Activated CD8-positive, alpha-beta T cell treated with anti-CD3 and anti-CD28 coated beads for 36 hours (primary cell): ENCODE measurements at regions of chr4 and their contacts with region 1.

Region 1: DNA sequence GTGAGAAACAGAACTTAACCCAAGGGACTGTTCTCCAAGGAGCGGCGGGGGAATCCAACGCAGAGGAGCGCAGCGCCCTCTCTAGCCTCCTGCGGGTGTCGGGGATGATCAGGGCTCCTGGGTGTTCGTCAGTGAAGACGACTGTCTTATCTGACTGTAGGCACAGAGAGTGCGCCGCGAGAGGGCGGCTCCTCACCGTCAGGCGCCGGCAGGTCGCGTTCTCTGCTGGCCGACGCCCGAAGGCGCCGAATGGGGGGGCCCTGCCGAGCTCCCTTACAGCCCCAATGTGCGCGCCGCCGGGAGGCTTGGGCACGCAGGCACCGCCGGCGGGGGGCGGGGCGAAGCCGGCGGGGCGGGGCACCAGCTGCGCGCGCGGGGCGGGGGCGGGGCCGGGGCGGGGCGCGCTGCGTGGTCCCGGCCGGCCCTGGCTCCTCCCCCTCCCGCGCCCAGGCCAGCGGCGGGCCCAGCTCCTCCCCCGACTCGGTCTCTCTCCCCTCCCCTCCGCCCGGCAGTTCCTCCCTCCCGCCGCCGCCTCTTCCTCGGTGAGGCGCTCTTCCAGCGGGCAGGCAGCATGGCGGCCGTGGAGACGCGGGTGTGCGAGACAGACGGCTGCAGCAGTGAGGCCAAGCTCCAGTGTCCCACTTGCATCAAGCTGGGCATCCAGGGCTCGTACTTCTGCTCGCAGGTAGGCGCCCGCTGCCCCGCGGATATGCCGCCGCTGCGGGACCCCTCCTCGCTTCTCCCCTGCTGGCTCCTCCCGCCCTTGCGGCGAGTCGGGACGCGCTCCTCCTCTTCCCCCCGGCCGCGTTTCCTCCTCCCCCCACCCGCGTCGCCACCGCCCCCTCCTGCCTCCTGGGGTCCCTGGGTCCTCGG is at the start of gene METAP1:
- DNase-seq: peak; percentile 96
- ATAC-seq: peak; percentile 90
- H3K4me3 Mint-ChIP-seq: peak within 1 kb of the TSS; percentile 89
- H3K27ac Mint-ChIP-seq: peak within 1 kb of the TSS; percentile 97
- H3K4me1 Mint-ChIP-seq: peaks cover 38% of the 10 kb centered on the region
- H3K27me3 Mint-ChIP-seq: no peaks in the 10 kb centered on the region
- CTCF ChIP-seq: peak; percentile 44
- total RNA-seq, gene METAP1: 67.1 to 70.4 TPM

Region 2: DNA sequence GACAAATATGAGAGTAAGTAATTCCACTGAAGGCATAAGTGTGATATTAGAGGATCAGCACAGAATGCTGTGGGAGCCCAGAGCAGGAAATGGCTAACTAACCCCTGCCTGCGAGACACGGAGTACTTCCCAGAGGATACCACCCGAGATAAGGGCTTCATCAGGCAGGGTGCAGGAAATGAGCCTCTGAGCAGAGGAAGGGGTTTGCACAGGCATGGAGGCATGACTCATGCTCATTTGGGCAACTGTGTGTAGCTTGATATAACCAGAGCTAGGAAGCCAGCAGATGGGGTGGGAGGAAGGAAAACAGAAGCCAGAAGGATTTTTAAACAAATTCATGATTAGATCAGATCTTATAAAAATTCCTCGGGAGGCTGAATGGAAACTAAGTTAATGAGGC is 267.0 kb before region 1 on chr4:
- CTCF ChIA-PET with region 1: no interaction called
- POLR2A ChIA-PET with region 1: no interaction called
- intact Hi-C with region 1: no loop called
- DNase-seq: no peak
- ATAC-seq: peak; percentile 66
- H3K4me3 Mint-ChIP-seq: no peak overlapping the region
- H3K27ac Mint-ChIP-seq: no peak overlapping the region
- H3K4me1 Mint-ChIP-seq: peaks cover 5% of the 10 kb centered on the region
- H3K27me3 Mint-ChIP-seq: no peaks in the 10 kb centered on the region
- CTCF ChIP-seq: no peak

Region 3: GRCh38 chr4:98786866-98787265 is 208.6 kb before region 1 on chr4:
- CTCF ChIA-PET with region 1: no interaction called
- POLR2A ChIA-PET with region 1: no interaction called
- intact Hi-C with region 1: no loop called
- DNase-seq: no peak
- ATAC-seq: no peak
- H3K4me3 Mint-ChIP-seq: no peak overlapping the region
- H3K27ac Mint-ChIP-seq: no peak overlapping the region
- H3K4me1 Mint-ChIP-seq: no peaks in the 10 kb centered on the region
- H3K27me3 Mint-ChIP-seq: no peaks in the 10 kb centered on the region
- CTCF ChIP-seq: no peak

Region 4: GRCh38 chr4:98851806-98852205 is 143.6 kb before region 1 on chr4:
- CTCF ChIA-PET with region 1: no interaction called
- POLR2A ChIA-PET with region 1: no interaction called
- intact Hi-C with region 1: no loop called
- DNase-seq: no peak
- ATAC-seq: no peak
- H3K4me3 Mint-ChIP-seq: no peak overlapping the region
- H3K27ac Mint-ChIP-seq: no peak overlapping the region
- H3K4me1 Mint-ChIP-seq: no peaks in the 10 kb centered on the region
- H3K27me3 Mint-ChIP-seq: peaks cover 2% of the 10 kb centered on the region
- CTCF ChIP-seq: no peak

Region 5: DNA sequence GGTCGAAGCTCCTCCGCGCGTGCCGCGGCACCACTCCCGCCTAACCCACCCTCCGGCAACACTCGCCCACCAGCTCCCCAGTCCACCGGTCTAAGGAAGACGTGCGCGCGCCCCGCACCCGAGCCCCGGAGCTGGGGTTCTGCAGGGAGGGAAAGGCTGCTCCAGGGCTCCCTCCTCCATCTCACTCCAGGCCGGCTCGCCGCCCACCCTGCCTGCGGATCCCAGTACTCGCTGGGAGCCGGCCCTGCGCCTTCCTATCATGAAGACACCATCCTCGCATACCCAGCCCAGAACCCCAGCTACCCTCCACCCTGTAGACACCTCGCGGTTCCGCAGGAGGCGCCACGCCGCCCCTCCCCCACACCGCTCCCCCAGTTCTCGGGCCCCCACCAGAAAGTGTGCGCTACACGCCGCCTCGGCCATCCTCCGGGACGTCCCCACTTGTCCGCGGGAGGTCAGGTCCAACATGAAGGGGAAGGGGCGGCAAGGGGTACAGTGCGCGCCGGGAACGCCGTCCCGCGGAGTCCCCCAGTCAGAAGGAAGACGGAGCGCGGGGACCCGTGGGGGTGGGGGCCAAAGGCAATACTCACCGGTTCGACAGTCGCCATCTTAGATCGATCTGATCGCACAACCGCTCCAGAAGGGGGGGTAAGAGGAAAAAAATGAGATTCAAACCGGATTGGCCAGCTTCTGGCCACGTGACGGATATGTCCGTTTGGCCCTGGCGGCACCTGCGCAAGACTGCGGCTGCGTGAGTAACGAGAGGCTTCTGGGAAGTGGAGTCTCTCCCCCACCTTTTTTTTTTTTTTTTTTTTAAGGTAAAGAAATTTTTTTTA is 66.7 kb before region 1 on chr4 and contains the start of gene EIF4E:
- CTCF ChIA-PET with region 1: interaction called, 27 read pairs
- POLR2A ChIA-PET with region 1: interaction called, 58 read pairs
- intact Hi-C with region 1: loop called (anchors 5 kb)
- DNase-seq: peak; percentile 98
- ATAC-seq: peak; percentile 78
- H3K4me3 Mint-ChIP-seq: peak within 1 kb of the TSS; percentile 88
- H3K27ac Mint-ChIP-seq: peak within 1 kb of the TSS; percentile 95
- H3K4me1 Mint-ChIP-seq: peaks cover 36% of the 10 kb centered on the region
- H3K27me3 Mint-ChIP-seq: no peaks in the 10 kb centered on the region
- CTCF ChIP-seq: peak; percentile 48
- total RNA-seq, gene EIF4E: 118 to 121 TPM

Region 6: GRCh38 chr4:98950925-98951324 is 44.5 kb before region 1 on chr4:
- CTCF ChIA-PET with region 1: interaction called, 10 read pairs
- POLR2A ChIA-PET with region 1: no interaction called
- intact Hi-C with region 1: no loop called
- DNase-seq: no peak
- ATAC-seq: no peak
- H3K4me3 Mint-ChIP-seq: no peak overlapping the region
- H3K27ac Mint-ChIP-seq: no peak overlapping the region
- H3K4me1 Mint-ChIP-seq: no peaks in the 10 kb centered on the region
- H3K27me3 Mint-ChIP-seq: peaks cover under 1% of the 10 kb centered on the region
- CTCF ChIP-seq: no peak

Region 7: GRCh38 chr4:99008051-99008450 is 12.6 kb after region 1 on chr4:
- CTCF ChIA-PET with region 1: interaction called, 25 read pairs
- POLR2A ChIA-PET with region 1: interaction called, 24 read pairs
- intact Hi-C with region 1: no loop called
- DNase-seq: no peak
- ATAC-seq: no peak
- H3K4me3 Mint-ChIP-seq: no peak overlapping the region
- H3K27ac Mint-ChIP-seq: no peak overlapping the region
- H3K4me1 Mint-ChIP-seq: peaks cover 42% of the 10 kb centered on the region
- H3K27me3 Mint-ChIP-seq: no peaks in the 10 kb centered on the region
- CTCF ChIP-seq: no peak

Region 8: DNA sequence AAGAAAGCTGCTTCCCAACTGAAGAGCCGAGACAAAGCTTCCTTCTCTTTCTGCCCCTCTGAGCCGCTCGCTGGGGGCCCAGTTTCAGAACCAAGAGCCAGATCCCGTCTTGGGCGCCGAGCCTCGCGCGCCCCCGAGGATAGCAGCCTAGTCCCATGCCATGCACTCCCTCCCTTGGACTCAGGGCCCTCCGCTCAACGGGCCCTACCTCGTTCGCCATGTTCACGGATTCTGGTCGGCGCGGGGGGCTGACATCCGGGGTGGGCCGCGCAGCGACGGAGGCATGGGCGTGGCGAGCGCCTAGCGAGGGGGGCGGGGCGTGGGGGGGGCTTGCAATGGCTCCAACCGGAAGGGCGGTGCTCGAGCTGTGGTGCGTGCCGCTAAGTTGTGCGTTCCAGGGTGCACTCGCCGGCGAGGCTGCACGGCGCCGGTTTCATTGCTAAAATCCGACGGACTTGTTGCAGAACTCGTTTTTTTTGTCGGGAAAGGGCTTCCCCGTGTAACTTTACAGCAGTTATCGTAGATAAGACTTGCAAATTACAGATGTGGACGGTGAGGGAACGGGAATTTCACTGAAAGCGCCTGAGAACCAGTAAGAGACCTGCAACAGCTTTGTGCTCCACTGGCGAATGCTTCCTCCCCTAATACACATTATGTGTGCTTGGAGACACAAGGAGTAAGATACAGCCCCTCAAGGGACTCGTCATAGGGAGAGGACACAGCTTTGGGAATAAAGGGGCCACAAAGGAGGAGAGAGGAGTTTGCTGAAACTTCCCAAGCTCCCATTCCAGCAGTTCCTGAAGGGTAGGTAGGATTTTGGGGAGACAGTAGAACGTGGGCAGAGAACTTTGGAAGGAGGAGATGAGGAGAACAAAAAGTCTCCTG is 93.3 kb after region 1 on chr4 and contains the start of gene ADH5:
- CTCF ChIA-PET with region 1: interaction called, 15 read pairs
- POLR2A ChIA-PET with region 1: interaction called, 22 read pairs
- intact Hi-C with region 1: no loop called
- DNase-seq: peak; percentile 95
- ATAC-seq: peak; percentile 97
- H3K4me3 Mint-ChIP-seq: peak within 1 kb of the TSS; percentile 93
- H3K27ac Mint-ChIP-seq: peak within 1 kb of the TSS; percentile 93
- H3K4me1 Mint-ChIP-seq: peaks cover 27% of the 10 kb centered on the region
- H3K27me3 Mint-ChIP-seq: no peaks in the 10 kb centered on the region
- CTCF ChIP-seq: no peak
- total RNA-seq, gene ADH5: 114 to 118 TPM

Region 9: DNA sequence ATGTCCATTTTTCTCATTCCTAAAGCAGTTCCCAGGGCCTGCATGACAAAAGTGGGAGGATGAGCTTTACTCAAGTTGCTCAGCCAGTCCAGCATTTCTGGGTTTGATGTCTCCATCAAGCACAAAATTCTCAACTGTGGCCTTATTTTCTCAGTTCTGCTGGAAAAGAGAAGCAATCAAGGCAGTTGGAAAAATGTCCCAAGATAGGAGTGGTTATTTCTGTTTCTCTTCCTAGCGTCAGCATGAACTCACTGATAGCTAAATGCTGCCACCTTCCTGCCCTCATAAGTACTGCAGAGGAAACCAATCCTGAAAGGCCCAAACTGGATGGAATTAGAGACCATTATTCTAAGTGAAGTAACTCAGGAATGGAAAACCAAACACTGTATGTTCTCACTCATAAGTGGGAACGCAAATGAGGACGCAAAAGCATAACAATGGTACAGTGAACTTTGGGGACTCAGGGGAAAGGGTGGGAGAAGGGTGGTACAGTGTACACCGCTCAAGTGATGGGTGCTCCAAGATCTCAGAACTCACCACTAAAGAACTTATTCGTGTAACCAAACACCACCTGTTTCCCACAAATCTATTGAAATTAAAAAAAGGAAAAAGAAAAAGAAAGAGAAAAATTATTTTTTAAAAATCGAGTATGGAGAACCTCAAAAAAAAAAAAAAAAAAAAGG is 410.2 kb after region 1 on chr4:
- CTCF ChIA-PET with region 1: interaction called, 16 read pairs
- POLR2A ChIA-PET with region 1: no interaction called
- intact Hi-C with region 1: no loop called
- DNase-seq: peak; percentile 69
- ATAC-seq: peak; percentile 72
- H3K4me3 Mint-ChIP-seq: no peak overlapping the region
- H3K27ac Mint-ChIP-seq: no peak overlapping the region
- H3K4me1 Mint-ChIP-seq: peaks cover 16% of the 10 kb centered on the region
- H3K27me3 Mint-ChIP-seq: no peaks in the 10 kb centered on the region
- CTCF ChIP-seq: peak; percentile 93